Activated CD4-positive, alpha-beta memory T cell treated with anti-CD3 and anti-CD28 coated beads for 36 hours (primary cell): ENCODE measurements at regions of chr5 and their contacts with region 1.

Region 1: GRCh38 chr5:81718300-81718699 is 32.6 kb downstream of the SSBP2 start:
- DNase-seq: no peak
- H3K4me3 Mint-ChIP-seq: peak overlapping the region; percentile 25
- H3K27ac Mint-ChIP-seq: no peak overlapping the region
- H3K4me1 Mint-ChIP-seq: peaks cover 44% of the 10 kb centered on the region
- H3K27me3 Mint-ChIP-seq: no peaks in the 10 kb centered on the region

Region 2: GRCh38 chr5:81631124-81631523 is 87.2 kb before region 1 on chr5:
- CTCF ChIA-PET with region 1: no interaction called
- POLR2A ChIA-PET with region 1: no interaction called
- intact Hi-C with region 1: loop called (anchors 5 kb)
- DNase-seq: peak; percentile 63
- H3K4me3 Mint-ChIP-seq: no peak overlapping the region
- H3K27ac Mint-ChIP-seq: no peak overlapping the region
- H3K4me1 Mint-ChIP-seq: peaks cover 8% of the 10 kb centered on the region
- H3K27me3 Mint-ChIP-seq: no peaks in the 10 kb centered on the region

Region 3: GRCh38 chr5:82375531-82376244 is 657.4 kb after region 1 on chr5:
- CTCF ChIA-PET with region 1: no interaction called
- POLR2A ChIA-PET with region 1: no interaction called
- intact Hi-C with region 1: no loop called
- DNase-seq: no peak
- H3K4me3 Mint-ChIP-seq: no peak overlapping the region
- H3K27ac Mint-ChIP-seq: no peak overlapping the region
- H3K4me1 Mint-ChIP-seq: peaks cover 9% of the 10 kb centered on the region
- H3K27me3 Mint-ChIP-seq: no peaks in the 10 kb centered on the region